CD8-positive, alpha-beta T cell (primary cell): ENCODE measurements at regions of chr1 and their contacts with region 1.

Region 1: DNA sequence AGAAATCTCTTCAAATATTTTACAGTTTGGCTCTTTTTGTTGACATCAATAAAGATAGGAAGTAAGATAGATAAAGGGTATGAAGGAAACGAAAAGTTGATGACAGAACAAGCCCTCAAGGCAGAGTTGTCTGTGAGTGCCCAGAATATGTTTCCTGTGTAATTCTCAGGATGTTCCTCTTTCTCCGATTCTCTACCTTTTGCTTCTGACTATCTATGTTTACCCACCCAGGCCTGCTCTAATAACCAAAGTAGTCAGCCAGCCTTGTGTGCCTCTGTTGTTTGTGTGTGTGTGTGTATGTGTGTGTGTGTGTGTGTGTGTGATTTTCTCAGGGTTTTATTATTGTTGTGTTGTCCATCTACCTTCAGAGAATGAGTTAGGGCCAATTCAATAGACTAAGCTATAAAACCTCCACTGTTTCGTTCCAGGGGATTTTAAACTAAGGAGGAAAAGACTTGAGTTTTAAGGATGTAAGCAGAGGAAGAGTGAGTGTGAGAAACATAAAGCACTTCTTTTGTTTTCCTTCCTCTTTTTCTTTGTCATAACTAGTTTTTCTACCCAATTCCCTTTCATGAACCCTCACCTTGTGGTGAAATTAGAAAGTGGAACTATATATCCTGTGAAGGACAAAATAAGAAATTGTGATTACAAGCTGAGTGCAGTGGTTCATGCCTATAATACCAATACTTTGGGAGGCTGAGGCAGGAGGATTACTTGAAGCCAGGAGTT is 627.4 kb upstream of the NR5A2 start:
- DNase-seq: no peak
- ATAC-seq: no peak
- H3K4me3 ChIP-seq: no peak overlapping the region
- H3K4me3 Mint-ChIP-seq: no peak overlapping the region
- H3K27ac ChIP-seq: no peak overlapping the region
- H3K27ac Mint-ChIP-seq: no peak overlapping the region
- H3K4me1 ChIP-seq: no peaks in the 10 kb centered on the region
- H3K4me1 Mint-ChIP-seq: no peaks in the 10 kb centered on the region
- H3K27me3 ChIP-seq: no peaks in the 10 kb centered on the region
- H3K27me3 Mint-ChIP-seq: peaks cover 3% of the 10 kb centered on the region
- CTCF ChIP-seq: no peak

Region 2: DNA sequence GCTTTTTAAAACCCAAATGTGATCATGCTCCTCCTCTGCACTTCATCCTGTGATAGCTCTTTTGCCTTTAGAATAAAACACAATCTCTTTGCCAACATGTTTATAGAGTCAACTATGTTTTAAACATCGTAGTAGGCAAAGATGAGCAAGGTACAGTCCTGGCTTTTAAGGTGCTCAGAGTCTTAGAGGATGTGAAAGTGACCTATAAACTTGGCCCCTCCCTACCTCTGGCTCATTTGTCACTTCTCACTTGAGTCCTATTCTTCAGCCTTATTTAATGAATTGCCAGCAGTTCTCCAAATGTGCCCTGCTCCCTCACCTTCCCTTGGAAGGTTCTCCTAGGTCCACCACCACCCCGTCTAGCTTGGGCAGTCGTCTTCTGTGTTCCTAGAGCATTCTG is 10.3 kb after region 1 on chr1:
- CTCF ChIA-PET with region 1: no interaction called
- POLR2A ChIA-PET with region 1: no interaction called
- intact Hi-C with region 1: loop called in 1 of 2 experiments (anchors 1 kb)
- DNase-seq: no peak
- ATAC-seq: no peak
- H3K4me3 ChIP-seq: no peak overlapping the region
- H3K4me3 Mint-ChIP-seq: no peak overlapping the region
- H3K27ac ChIP-seq: no peak overlapping the region
- H3K27ac Mint-ChIP-seq: no peak overlapping the region
- H3K4me1 ChIP-seq: no peaks in the 10 kb centered on the region
- H3K4me1 Mint-ChIP-seq: no peaks in the 10 kb centered on the region
- H3K27me3 ChIP-seq: peaks cover 0 to 2% of the 10 kb centered on the region in 2 experiments
- H3K27me3 Mint-ChIP-seq: peaks cover 14% of the 10 kb centered on the region
- CTCF ChIP-seq: no peak

Region 3: DNA sequence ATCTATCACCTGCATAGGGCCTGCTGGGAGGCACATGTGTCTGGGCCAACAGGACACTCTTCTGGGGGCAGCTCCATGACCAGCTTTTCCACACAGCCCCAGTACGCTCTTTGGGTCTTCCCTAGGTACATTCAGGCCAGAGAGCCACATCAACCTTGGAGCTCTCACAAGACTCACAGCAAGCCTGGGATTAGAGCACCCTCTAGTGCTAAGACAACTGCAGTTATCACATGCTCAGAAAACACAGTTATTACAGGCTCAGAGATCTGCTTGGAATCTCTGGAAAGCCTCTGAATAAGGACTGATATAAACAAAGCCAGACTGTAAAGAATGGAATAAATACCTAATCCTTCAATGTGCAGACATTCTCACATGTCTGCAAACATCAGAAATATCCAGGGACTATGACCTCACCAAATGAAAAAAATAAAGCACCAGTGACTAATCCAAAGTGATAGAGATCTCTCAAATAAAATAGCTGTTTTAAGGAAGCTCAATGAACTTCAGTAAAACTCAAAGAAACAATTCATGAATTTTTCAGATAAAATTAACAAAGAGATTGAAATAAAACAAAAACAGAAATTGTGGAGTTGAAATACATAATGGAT is 63.5 kb after region 1 on chr1:
- CTCF ChIA-PET with region 1: no interaction called
- POLR2A ChIA-PET with region 1: no interaction called
- intact Hi-C with region 1: no loop called
- DNase-seq: peak in 2 of 9 experiments; percentile 11 to 26
- ATAC-seq: no peak
- H3K4me3 ChIP-seq: no peak overlapping the region
- H3K4me3 Mint-ChIP-seq: no peak overlapping the region
- H3K27ac ChIP-seq: no peak overlapping the region
- H3K27ac Mint-ChIP-seq: no peak overlapping the region
- H3K4me1 ChIP-seq: no peaks in the 10 kb centered on the region
- H3K4me1 Mint-ChIP-seq: no peaks in the 10 kb centered on the region
- H3K27me3 ChIP-seq: no peaks in the 10 kb centered on the region
- H3K27me3 Mint-ChIP-seq: no peaks in the 10 kb centered on the region
- CTCF ChIP-seq: no peak